H1 (cell line): ENCODE measurements at regions of chr4 and their contacts with region 1.

Region 1: DNA sequence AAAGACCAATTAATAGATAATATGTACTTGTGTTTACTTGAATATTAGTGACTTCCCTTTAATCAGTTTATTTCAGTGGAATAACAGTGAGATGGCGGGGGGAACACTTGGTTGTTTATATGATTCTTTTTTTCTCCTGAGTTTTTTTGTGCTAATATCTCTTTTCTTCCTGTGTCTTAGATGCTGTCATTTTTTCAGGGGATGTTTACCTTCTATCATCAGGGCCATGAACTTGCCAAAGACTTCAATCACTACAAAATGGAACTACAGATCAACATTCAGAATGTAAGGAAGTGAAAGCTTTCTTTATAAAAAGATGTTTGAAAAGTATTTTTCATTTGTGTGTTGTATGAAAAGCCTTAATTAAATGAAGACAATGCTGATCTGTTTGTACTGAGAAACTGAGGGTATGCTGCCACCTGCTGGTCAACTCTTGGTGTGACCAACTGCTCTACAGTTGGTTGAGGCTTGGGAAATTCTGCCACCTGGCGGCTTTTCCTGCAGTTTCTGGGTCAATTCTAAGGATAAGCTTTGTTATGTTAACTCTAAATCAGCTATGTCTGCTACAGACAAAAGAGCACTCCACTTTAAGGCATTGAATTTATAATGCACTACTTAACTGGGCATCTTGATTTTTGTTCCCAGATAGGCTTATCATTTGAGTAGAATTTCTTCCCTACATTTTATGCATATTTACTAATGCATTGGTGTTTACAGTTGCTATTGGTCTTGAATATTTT is 134.8 kb downstream of the ARHGAP10 start:
- DNase-seq: peak; percentile 88 to 94
- H3K4me3 ChIP-seq: peak overlapping the region in 1 of 4 experiments; percentile 12; a peak in 1 of 8 replicates
- H3K27ac ChIP-seq: no peak overlapping the region
- H3K4me1 ChIP-seq: peaks cover 2 to 19% (median 10%) of the 10 kb centered on the region in 4 experiments; a peak in 6 of 7 replicates
- H3K27me3 ChIP-seq: no peaks in the 10 kb centered on the region
- CTCF ChIP-seq: peak; percentile 71 to 100 (median 98)
- EP300 ChIP-seq: no peak
- POLR2A ChIP-seq: no peak
- RAD21 ChIP-seq: peak; percentile 100

Region 2: GRCh38 chr4:147160908-147161513 is 705.7 kb before region 1 on chr4:
- CTCF ChIA-PET with region 1: interaction called, 10 read pairs
- POLR2A ChIA-PET with region 1: no interaction called
- DNase-seq: no peak
- H3K4me3 ChIP-seq: no peak overlapping the region
- H3K27ac ChIP-seq: no peak overlapping the region
- H3K4me1 ChIP-seq: no peaks in the 10 kb centered on the region; a peak in 2 of 7 replicates
- H3K27me3 ChIP-seq: peaks cover 0 to 4% (median 0%) of the 10 kb centered on the region in 4 experiments; a peak in 2 of 7 replicates
- CTCF ChIP-seq: peak in 2 of 3 experiments; percentile 73 to 76; a peak in 3 of 4 replicates
- EP300 ChIP-seq: no peak
- POLR2A ChIP-seq: no peak
- RAD21 ChIP-seq: peak; percentile 81 to 82

Region 3: GRCh38 chr4:147596981-147597380 is 269.7 kb before region 1 on chr4:
- CTCF ChIA-PET with region 1: interaction called, 93 read pairs
- POLR2A ChIA-PET with region 1: no interaction called
- DNase-seq: no peak
- H3K4me3 ChIP-seq: no peak overlapping the region
- H3K27ac ChIP-seq: no peak overlapping the region
- H3K4me1 ChIP-seq: peaks cover 0 to 3% (median 0%) of the 10 kb centered on the region in 4 experiments; a peak in 1 of 7 replicates
- H3K27me3 ChIP-seq: no peaks in the 10 kb centered on the region
- CTCF ChIP-seq: no peak
- EP300 ChIP-seq: no peak
- POLR2A ChIP-seq: no peak
- RAD21 ChIP-seq: no peak

Region 4: DNA sequence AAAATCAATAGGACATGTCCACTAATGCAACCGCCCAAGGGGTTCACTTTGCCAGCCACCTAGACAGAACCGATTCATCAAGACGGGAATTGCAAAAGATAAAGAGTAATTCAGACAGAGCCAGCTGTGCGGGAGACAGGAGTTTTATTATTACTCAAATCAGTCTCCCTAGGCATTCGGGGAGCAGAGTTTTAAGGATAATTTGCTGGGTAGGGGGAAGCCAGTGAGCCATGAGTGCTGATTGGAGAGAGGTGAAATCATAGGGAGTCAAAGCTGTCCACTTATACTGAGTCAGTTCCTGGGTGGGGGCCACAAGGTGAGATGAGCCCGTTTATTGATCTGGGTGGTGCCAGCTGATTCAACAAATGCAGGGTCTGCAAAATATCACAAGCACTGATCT is 241.0 kb before region 1 on chr4:
- CTCF ChIA-PET with region 1: interaction called, 32 read pairs
- POLR2A ChIA-PET with region 1: no interaction called
- DNase-seq: no peak
- H3K4me3 ChIP-seq: no peak overlapping the region
- H3K27ac ChIP-seq: no peak overlapping the region
- H3K4me1 ChIP-seq: peaks cover 4 to 19% (median 6%) of the 10 kb centered on the region in 4 experiments; a peak in 5 of 7 replicates
- H3K27me3 ChIP-seq: no peaks in the 10 kb centered on the region
- CTCF ChIP-seq: no peak
- EP300 ChIP-seq: no peak
- POLR2A ChIP-seq: no peak
- RAD21 ChIP-seq: no peak

Region 5: DNA sequence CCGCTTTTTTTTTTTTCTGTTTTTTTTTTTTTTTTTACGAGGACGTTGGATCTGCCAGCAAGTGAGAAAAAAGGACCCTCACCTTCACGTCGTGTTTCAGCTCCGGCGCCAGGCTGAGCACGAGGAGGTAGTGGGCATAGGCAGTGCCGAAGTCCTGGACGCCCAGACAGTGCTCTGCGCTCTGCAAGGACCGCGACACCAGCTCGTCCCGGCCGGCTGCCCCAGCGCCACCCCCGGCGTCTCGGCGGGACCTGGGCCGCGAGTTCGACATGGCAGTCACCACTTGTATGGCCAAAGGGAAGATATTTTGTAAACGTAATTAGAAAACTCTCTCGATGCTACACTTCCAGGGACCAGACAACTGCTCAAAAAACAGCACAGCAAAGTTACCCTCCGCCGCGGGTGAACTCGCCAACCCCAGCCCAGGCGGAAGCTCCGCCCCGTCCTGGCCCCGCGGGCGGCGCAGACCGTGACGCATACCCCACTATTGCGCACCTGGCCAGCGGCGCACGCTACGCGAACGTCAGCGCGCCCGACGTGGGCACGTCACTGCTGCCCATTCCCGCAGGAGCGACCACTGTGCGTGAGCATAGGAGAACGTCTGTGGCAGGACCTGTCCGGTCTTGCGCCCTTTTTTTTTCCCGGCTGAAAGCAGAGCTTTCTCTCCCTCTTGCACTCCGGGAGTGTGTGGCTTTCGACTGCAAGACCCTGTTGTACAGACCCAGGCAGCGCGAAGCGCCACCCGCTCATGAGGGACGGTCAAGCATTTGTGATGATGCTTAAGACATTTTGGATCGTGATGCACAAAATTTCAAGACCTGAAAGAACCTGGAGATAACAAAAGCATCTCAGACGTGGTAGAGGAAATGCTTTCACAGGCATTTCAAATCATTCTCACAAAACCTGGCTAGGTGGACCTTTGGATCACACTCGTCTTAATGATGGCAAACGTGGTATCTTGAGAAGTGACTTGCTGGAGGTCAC is 182.7 kb before region 1 on chr4 and contains the start of gene PRMT9:
- CTCF ChIA-PET with region 1: interaction called, 38 read pairs
- POLR2A ChIA-PET with region 1: interaction called, 5 read pairs
- DNase-seq: peak; percentile 49 to 93
- H3K4me3 ChIP-seq: peak within 1 kb of the TSS; percentile 68 to 83 (median 77)
- H3K27ac ChIP-seq: peak within 1 kb of the TSS; percentile 30; the same call in 1 of the 2 replicates
- H3K4me1 ChIP-seq: peaks cover 0 to 6% (median 3%) of the 10 kb centered on the region in 4 experiments; a peak in 4 of 7 replicates
- H3K27me3 ChIP-seq: no peaks in the 10 kb centered on the region
- CTCF ChIP-seq: no peak
- EP300 ChIP-seq: peak in 1 of 2 experiments; percentile 51; a peak in 1 of 3 replicates
- POLR2A ChIP-seq: peak; percentile 71 to 92
- RAD21 ChIP-seq: no peak
- total RNA-seq, gene PRMT9: 9.6 and 9.9 TPM in 2 replicates

Region 6: DNA sequence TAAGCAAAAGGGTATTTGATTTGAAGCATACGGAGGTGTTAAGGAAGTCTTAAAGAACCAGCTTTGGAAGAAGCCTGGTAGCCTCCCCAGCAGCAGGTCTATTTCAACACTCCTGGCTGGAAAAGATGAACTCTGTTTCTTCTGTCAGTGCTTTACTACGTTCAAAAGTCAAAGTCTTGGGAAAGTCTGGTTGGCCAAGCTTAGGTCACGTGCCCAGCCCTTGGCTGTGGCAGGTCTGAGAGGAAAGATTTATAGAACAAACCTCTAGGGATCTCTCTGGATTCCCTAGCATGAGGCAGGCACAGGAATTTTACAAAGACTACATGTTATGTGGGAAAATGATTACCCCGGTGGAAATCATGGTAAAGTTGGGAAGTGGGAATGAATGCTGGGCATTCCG is 143.4 kb before region 1 on chr4:
- CTCF ChIA-PET with region 1: interaction called, 13 read pairs
- POLR2A ChIA-PET with region 1: no interaction called
- DNase-seq: peak in 1 of 2 experiments; percentile 32
- H3K4me3 ChIP-seq: no peak overlapping the region
- H3K27ac ChIP-seq: no peak overlapping the region
- H3K4me1 ChIP-seq: no peaks in the 10 kb centered on the region; a peak in 2 of 7 replicates
- H3K27me3 ChIP-seq: 0 out of 7 replicates have a peak, but pooled peaks cover 0 to 4% (median 0%) of the 10 kb centered on the region in 4 experiments
- CTCF ChIP-seq: no peak
- EP300 ChIP-seq: no peak
- POLR2A ChIP-seq: no peak
- RAD21 ChIP-seq: no peak

Region 7: GRCh38 chr4:147822128-147822527 is 44.6 kb before region 1 on chr4:
- CTCF ChIA-PET with region 1: interaction called, 16 read pairs
- POLR2A ChIA-PET with region 1: no interaction called
- DNase-seq: no peak
- H3K4me3 ChIP-seq: no peak overlapping the region
- H3K27ac ChIP-seq: no peak overlapping the region
- H3K4me1 ChIP-seq: no peaks in the 10 kb centered on the region; a peak in 1 of 7 replicates
- H3K27me3 ChIP-seq: no peaks in the 10 kb centered on the region
- CTCF ChIP-seq: no peak
- EP300 ChIP-seq: no peak
- POLR2A ChIP-seq: no peak
- RAD21 ChIP-seq: no peak

Region 8: DNA sequence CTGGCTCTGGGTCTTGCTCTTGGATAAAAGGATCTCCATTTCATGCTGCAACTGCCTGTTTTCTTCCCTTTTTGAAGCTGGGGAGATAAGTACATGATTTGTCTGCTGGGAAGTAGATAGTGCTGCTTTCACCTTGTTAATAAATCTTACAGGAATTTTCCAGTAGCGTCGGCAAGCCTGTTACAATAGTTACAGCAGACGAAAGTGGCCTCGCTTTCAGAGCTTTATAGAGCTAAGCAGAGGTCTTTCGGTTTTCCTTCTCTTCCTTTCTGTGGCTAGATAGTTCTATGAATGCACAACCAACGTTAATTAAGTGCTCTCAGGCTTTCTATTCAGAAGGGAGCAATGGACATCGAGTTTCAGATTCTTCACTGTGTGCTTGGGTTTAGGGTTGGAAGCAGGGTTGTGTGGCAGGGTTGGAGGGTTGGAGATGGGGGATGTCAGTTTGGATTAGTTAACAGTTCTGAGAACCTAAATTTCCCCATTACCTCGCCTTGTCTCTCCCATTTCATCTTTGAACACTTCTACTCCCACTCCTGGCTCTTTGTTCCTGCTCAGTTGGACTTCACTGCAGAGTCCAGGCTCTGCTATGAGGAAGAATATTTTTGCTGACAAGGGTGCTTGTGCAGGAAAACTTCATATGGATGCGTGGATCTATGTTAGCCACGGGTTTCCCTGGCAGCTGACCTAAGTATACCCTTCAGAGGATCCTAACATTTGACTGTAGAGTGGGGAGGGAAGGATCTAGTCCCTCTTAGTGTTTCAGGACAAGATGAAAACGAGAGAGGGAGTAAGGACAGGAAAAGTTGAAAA is 103.1 kb after region 1 on chr4:
- CTCF ChIA-PET with region 1: no interaction called
- POLR2A ChIA-PET with region 1: no interaction called
- DNase-seq: no peak
- H3K4me3 ChIP-seq: no peak overlapping the region
- H3K27ac ChIP-seq: no peak overlapping the region
- H3K4me1 ChIP-seq: peaks cover 2 to 5% (median 4%) of the 10 kb centered on the region in 4 experiments; a peak in 4 of 7 replicates
- H3K27me3 ChIP-seq: no peaks in the 10 kb centered on the region
- CTCF ChIP-seq: no peak
- EP300 ChIP-seq: no peak
- POLR2A ChIP-seq: no peak
- RAD21 ChIP-seq: no peak

Region 9: GRCh38 chr4:148017836-148018235 is 151.1 kb after region 1 on chr4:
- CTCF ChIA-PET with region 1: no interaction called
- POLR2A ChIA-PET with region 1: no interaction called
- DNase-seq: no peak
- H3K4me3 ChIP-seq: no peak overlapping the region
- H3K27ac ChIP-seq: no peak overlapping the region
- H3K4me1 ChIP-seq: 0 out of 7 replicates have a peak, but pooled peaks cover 0 to 3% (median 0%) of the 10 kb centered on the region in 4 experiments
- H3K27me3 ChIP-seq: no peaks in the 10 kb centered on the region
- CTCF ChIP-seq: no peak
- EP300 ChIP-seq: no peak
- POLR2A ChIP-seq: no peak
- RAD21 ChIP-seq: no peak

Region 10: DNA sequence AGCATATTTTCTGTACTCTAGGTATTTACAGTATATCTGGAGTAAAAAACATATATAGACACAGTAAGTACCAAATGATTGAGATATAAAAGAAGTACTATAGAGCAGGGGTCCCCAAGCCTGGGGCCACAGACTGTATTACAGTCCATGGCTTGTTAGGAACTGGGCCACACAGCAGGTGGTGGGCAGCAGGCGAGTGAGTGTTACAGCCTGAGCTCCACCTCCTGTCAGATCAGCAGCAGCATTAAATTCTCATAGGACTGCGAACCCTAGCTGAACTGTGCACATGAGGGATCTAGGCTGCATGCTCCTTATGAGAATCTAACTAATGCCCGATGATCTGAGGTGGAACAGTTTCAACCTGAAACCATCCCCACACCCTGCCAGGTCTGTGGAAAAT is 274.8 kb after region 1 on chr4:
- CTCF ChIA-PET with region 1: no interaction called
- POLR2A ChIA-PET with region 1: no interaction called
- DNase-seq: no peak
- H3K4me3 ChIP-seq: no peak overlapping the region
- H3K27ac ChIP-seq: no peak overlapping the region
- H3K4me1 ChIP-seq: peaks cover 0 to 8% (median 0%) of the 10 kb centered on the region in 4 experiments; a peak in 2 of 7 replicates
- H3K27me3 ChIP-seq: no peaks in the 10 kb centered on the region
- CTCF ChIP-seq: no peak
- EP300 ChIP-seq: no peak
- POLR2A ChIP-seq: no peak
- RAD21 ChIP-seq: no peak